Mammary epithelial cell (primary cell): ENCODE measurements at regions of chr1 and their contacts with region 1.

Region 1: DNA sequence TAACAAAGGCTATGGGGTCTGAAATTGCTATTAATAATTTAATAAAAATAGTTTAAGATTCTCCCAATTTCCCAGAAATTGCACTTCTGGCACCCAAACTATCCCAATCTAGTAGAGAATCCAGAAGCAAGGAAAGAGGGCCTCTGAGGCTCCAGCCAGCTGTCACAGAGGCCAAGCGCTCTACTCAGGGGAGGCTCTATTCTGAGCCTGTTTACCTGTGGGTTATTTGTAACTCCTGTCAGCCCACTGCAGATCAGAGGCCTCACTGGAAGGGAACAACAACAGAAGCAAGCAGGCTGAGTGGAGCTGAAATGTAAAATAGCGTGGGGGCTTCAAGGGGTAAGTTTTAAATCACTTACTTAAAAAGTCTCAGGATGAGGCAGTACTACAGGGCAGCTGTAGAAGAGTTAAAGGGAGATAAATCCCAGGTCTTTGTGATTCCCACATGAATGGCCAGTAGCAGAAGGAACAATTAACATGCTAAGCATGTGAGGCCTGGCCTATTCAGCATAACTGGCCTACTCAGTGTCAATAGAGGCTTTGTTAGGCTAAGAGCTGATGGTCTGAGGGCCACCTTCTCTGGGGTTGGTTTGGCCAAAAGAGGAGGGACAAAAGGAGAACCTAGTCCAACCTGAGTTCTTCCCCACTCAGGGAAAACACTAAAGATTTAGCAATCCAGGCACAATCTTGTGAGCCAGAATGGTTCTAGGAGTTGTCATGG is 12.8 kb downstream of the ZNF687 start:
- DNase-seq: no peak
- H3K4me3 ChIP-seq: no peak overlapping the region
- H3K27ac ChIP-seq: no peak overlapping the region
- H3K4me1 ChIP-seq: no peaks in the 10 kb centered on the region
- H3K27me3 ChIP-seq: no peaks in the 10 kb centered on the region
- CTCF ChIP-seq: no peak

Region 2: DNA sequence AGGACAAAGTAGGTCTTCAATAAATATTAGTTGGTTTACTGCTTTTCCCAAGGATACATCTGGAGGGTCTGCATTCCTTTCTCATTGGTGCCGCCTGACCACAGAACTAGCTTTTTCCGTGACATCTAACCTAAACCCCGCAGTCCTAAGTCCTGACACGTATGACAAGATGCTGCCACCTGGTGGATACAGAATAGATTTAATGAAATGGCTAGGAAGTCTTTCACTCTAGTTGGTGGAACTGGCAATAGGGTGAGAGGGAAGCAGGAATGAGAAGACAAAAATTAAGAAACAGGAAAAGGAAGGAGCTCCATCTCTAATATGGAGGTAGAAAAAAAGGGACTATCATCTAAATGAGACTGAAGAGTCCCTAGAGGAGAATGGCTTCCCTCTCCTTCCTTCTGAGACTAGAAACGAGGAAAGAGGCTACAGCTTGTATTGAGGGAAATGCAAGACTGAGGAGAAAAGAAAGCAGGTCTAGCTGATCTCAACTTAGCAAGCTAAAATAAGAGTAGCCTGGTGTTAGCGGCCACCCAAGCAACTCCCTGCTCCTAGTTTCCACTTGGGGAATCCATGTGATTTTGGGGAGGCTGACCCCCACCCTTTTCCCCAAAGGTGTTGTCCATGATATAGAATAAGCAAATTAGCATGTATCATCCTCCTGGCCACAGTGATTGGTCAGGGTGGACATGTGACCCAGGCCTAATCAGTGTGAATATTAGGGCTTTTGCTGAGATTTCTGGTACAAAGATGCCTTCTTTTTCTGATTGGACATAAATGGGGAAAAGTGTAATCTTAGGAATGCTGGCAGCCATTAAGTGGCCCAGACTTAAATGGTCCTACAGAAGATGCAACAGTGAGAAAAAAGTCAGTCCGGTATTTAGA is 46.2 kb after region 1 on chr1:
- CTCF ChIA-PET with region 1: no interaction called
- dilution Hi-C with region 1: loop called (anchors 5 kb)
- in situ Hi-C with region 1: loop called in 1 of 2 experiments (anchors 5 kb)
- intact Hi-C with region 1: no loop called
- DNase-seq: peak; percentile 72
- H3K4me3 ChIP-seq: no peak overlapping the region
- H3K27ac ChIP-seq: no peak overlapping the region
- H3K4me1 ChIP-seq: peaks cover 4% of the 10 kb centered on the region
- H3K27me3 ChIP-seq: no peaks in the 10 kb centered on the region
- CTCF ChIP-seq: peak; percentile 71 to 72